ENCODE measurements at regions of chr11 and their contacts with region 1.

Region 1: DNA sequence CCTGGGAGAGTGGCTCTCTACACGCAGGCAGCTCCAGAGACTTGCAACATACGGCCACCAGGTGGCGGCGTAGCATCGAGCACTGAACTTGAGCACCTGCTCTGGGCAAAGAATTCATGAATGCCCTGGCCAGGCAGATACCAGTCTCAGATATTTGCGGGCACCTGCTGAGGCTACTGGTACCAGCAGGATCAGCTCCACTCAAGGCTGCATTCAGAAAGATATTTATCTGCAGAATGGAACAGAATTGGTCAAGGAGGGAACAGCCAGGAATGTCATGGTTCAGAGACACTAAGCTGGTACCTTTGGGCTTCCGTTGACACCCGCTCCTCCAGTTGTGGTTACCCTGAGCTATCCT is 10.8 kb upstream of the CCDC86 start:
- DNase-seq: peak; percentile 68
- ATAC-seq: peak; percentile 97
- H3K4me3 ChIP-seq: no peak overlapping the region
- H3K27ac ChIP-seq: no peak overlapping the region
- H3K4me1 ChIP-seq: no peaks in the 10 kb centered on the region
- H3K27me3 ChIP-seq: peaks cover 36% of the 10 kb centered on the region
- CTCF ChIP-seq: peak; percentile 94
- POLR2A ChIP-seq: 0 out of 2 replicates have a peak, but pooled peaks have one; percentile 28
- RAD21 ChIP-seq: peak; percentile 96

Region 2: GRCh38 chr11:60847281-60847680 is 16.2 kb after region 1 on chr11:
- CTCF ChIA-PET with region 1: no interaction called
- POLR2A ChIA-PET with region 1: no interaction called
- dilution Hi-C with region 1: no loop called
- in situ Hi-C with region 1: no loop called
- intact Hi-C with region 1: no loop called
- DNase-seq: no peak
- ATAC-seq: no peak
- H3K4me3 ChIP-seq: no peak overlapping the region
- H3K27ac ChIP-seq: no peak overlapping the region
- H3K4me1 ChIP-seq: peaks cover 14% of the 10 kb centered on the region
- H3K27me3 ChIP-seq: no peaks in the 10 kb centered on the region
- CTCF ChIP-seq: no peak
- POLR2A ChIP-seq: no peak
- RAD21 ChIP-seq: no peak

Region 3: GRCh38 chr11:60887556-60887955 is 56.4 kb after region 1 on chr11:
- CTCF ChIA-PET with region 1: interaction called, 86 read pairs
- POLR2A ChIA-PET with region 1: interaction called, 4 read pairs
- dilution Hi-C with region 1: no loop called
- in situ Hi-C with region 1: loop called (anchors 5 kb)
- intact Hi-C with region 1: loop called (anchors 1 kb)
- DNase-seq: peak; percentile 61
- ATAC-seq: peak; percentile 97
- H3K4me3 ChIP-seq: no peak overlapping the region
- H3K27ac ChIP-seq: no peak overlapping the region
- H3K4me1 ChIP-seq: no peaks in the 10 kb centered on the region
- H3K27me3 ChIP-seq: no peaks in the 10 kb centered on the region
- CTCF ChIP-seq: peak; percentile 75
- POLR2A ChIP-seq: no peak
- RAD21 ChIP-seq: peak; percentile 89

Region 4: GRCh38 chr11:60906132-60906972 is 75.2 kb after region 1 on chr11 and contains the start of gene PRPF19:
- CTCF ChIA-PET with region 1: interaction called, 12 read pairs
- POLR2A ChIA-PET with region 1: no interaction called
- dilution Hi-C with region 1: no loop called
- in situ Hi-C with region 1: no loop called
- intact Hi-C with region 1: no loop called
- DNase-seq: peak; percentile 92
- ATAC-seq: peak; percentile 98
- H3K4me3 ChIP-seq: peak within 1 kb of the TSS; percentile 69
- H3K27ac ChIP-seq: peak within 1 kb of the TSS; percentile 74
- H3K4me1 ChIP-seq: peaks cover 3% of the 10 kb centered on the region; the same call in 1 of the 2 replicates
- H3K27me3 ChIP-seq: peaks cover 10% of the 10 kb centered on the region
- CTCF ChIP-seq: no peak
- POLR2A ChIP-seq: peak; percentile 82
- RAD21 ChIP-seq: no peak
- total RNA-seq, gene PRPF19: 29.7 and 29.8 TPM in 2 replicates

Region 5: GRCh38 chr11:60978546-60979380 is 147.6 kb after region 1 on chr11:
- CTCF ChIA-PET with region 1: no interaction called
- POLR2A ChIA-PET with region 1: no interaction called
- dilution Hi-C with region 1: no loop called
- in situ Hi-C with region 1: no loop called
- intact Hi-C with region 1: no loop called
- DNase-seq: no peak
- ATAC-seq: no peak
- H3K4me3 ChIP-seq: no peak overlapping the region
- H3K27ac ChIP-seq: no peak overlapping the region
- H3K4me1 ChIP-seq: no peaks in the 10 kb centered on the region; the same call in 1 of the 2 replicates
- H3K27me3 ChIP-seq: peaks cover 29% of the 10 kb centered on the region
- CTCF ChIP-seq: no peak
- POLR2A ChIP-seq: no peak
- RAD21 ChIP-seq: no peak

Region 6: DNA sequence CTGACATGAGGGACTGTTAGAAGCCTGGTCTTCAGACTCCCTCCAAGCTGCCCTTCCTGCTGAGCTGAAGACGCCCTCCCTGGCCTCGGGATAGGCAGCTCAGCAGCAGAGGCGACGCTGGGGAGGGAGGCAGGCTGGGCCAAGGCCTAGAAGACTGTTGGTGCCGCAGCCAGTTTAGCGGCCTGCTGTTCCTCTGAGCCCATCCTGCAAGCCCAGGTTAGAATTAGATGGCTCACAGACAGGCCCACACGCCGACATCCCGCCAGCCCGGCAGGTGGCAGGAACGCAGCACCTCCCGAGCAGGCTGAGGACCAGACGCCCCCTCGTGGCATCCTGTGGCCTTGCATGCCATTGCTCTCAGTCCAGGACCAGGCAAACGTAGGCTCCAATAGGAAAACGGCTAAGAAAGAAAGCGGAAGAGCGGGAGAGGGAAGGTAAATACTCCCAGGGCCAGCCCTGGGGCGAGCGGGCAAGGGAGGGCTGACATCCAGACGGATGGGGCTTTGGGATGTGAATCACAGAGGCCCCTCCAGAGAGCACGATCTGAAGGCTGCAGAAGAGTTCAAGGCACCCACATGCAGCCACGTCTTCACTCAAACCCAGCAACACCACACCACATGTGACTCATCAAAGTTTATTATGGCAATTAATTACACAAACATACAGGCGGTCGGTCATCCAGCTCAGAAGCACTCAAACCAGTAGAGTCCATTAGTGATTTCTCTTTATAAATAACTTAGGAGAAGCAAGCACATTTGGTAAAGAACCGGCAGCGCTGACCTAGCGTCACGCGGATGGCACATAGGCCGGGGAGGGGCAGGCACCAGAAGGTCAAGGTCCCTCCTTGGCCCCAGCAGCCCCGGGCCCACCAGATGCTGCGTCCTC is 298.8 kb after region 1 on chr11:
- CTCF ChIA-PET with region 1: no interaction called
- POLR2A ChIA-PET with region 1: no interaction called
- dilution Hi-C with region 1: no loop called
- in situ Hi-C with region 1: no loop called
- intact Hi-C with region 1: loop called (anchors 2 kb)
- DNase-seq: peak; percentile 93
- ATAC-seq: peak; percentile 96
- H3K4me3 ChIP-seq: peak overlapping the region; percentile 11; the same call in 1 of the 2 replicates
- H3K27ac ChIP-seq: peak overlapping the region; percentile 18
- H3K4me1 ChIP-seq: peaks cover 10% of the 10 kb centered on the region
- H3K27me3 ChIP-seq: peaks cover 5% of the 10 kb centered on the region; the same call in 1 of the 2 replicates
- CTCF ChIP-seq: peak; percentile 100
- POLR2A ChIP-seq: peak; percentile 39; the same call in 1 of the 2 replicates
- RAD21 ChIP-seq: peak; percentile 93

Region 7: DNA sequence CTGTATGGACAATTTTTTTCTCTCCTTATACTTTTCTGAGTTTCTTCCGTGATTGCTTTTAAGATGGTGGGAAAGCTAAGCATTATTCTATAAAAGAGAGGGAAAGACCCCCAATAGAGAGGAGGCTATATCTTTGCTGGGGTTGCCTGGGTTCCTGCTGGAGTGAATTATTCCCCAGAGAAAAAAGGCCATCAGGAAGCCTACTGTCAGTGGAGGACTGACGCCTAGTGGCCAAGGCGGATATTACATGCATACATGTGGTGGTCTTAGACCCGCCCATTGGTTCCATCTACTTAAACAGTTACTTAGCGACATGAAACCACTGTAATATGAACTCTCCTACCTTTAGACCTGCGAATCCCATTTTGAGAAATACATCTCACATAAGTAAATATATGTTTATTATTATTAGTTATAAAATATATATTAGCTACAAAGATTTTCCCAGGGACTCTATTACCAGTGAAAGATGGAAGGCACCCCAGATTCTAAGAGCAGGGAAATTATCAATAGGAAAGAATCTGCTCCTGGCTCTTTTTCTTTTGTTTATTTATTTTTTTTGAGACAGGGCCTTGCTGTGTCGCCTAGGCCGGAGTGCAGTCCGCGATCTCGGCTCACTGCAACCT is 356.5 kb after region 1 on chr11:
- CTCF ChIA-PET with region 1: no interaction called
- POLR2A ChIA-PET with region 1: no interaction called
- dilution Hi-C with region 1: no loop called
- in situ Hi-C with region 1: no loop called
- intact Hi-C with region 1: loop called (anchors 1 kb)
- DNase-seq: peak; percentile 77
- ATAC-seq: peak; percentile 99
- H3K4me3 ChIP-seq: no peak overlapping the region
- H3K27ac ChIP-seq: no peak overlapping the region
- H3K4me1 ChIP-seq: no peaks in the 10 kb centered on the region
- H3K27me3 ChIP-seq: no peaks in the 10 kb centered on the region; the same call in none of the 2 replicates
- CTCF ChIP-seq: peak; percentile 93
- POLR2A ChIP-seq: no peak
- RAD21 ChIP-seq: peak; percentile 94

Region 8: GRCh38 chr11:61270354-61271076 is 439.4 kb after region 1 on chr11:
- CTCF ChIA-PET with region 1: no interaction called
- POLR2A ChIA-PET with region 1: no interaction called
- dilution Hi-C with region 1: no loop called
- in situ Hi-C with region 1: no loop called
- intact Hi-C with region 1: no loop called
- DNase-seq: peak; percentile 76
- ATAC-seq: peak; percentile 78
- H3K4me3 ChIP-seq: no peak overlapping the region
- H3K27ac ChIP-seq: no peak overlapping the region
- H3K4me1 ChIP-seq: peaks cover 2% of the 10 kb centered on the region
- H3K27me3 ChIP-seq: no peaks in the 10 kb centered on the region
- CTCF ChIP-seq: no peak
- POLR2A ChIP-seq: no peak
- RAD21 ChIP-seq: no peak